ENCODE measurements at regions of chr1 and their contacts with region 1.

Region 1: DNA sequence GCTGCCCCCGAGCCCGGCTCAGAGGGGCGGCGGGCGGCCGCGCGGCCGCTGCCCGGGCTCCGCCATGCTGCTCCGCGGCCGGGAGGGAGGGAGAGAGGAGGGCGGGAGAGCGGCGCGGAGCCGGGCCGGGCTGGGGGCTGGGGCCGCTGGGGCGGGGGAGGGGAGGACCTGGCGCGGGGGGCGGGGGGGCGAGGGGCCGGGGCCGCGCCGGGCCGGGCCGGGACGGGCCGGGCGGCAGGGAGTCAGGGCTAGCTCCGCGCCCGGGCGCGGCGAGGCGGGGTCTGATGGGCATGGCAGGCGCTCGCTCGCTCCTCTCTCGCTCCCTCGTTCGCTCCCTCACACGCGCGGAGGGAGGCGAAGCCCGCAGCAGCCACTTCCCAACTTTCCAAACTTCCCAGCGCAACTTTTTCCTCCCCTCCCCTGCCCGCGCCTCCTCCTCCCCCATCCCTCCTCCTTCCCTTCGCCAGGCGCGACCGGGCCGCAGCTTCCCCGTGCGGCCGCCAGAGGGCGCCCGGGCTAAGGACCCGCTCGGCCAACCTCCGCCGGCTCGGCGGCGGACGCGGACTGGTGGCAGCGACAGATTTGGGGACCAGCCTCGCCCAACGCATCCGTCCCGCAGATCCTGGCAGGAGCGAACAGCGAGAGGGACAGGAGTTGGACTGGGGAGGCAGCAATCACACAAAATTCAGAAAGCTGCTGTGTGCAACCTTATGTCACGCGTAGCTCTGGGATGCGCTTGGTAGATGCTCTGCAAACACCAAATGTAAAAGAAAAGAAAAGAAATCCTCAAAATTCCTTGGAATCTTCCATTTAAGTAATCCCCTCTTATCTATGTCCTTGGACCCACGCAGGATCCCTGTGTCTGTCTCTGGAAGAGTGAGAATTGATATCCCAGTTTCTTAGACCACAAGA is at the start of gene TRABD2B:
- DNase-seq: peak; percentile 95
- H3K4me3 ChIP-seq: peak within 1 kb of the TSS; percentile 62 to 90 (median 82)
- H3K27ac ChIP-seq: peak within 1 kb of the TSS; percentile 84 to 87 (median 86)
- H3K4me1 ChIP-seq: peaks cover 9 to 51% (median 44%) of the 10 kb centered on the region in 4 donors
- H3K27me3 ChIP-seq: peaks cover 0 to 14% (median 0%) of the 10 kb centered on the region in 4 donors
- CTCF ChIP-seq: peak in 2 of 3 experiments; percentile 92 to 97
- EP300 ChIP-seq: no peak
- POLR2A ChIP-seq: no peak
- total RNA-seq, gene TRABD2B: 4.0 to 7.6 (median 4.1) TPM

Region 2: DNA sequence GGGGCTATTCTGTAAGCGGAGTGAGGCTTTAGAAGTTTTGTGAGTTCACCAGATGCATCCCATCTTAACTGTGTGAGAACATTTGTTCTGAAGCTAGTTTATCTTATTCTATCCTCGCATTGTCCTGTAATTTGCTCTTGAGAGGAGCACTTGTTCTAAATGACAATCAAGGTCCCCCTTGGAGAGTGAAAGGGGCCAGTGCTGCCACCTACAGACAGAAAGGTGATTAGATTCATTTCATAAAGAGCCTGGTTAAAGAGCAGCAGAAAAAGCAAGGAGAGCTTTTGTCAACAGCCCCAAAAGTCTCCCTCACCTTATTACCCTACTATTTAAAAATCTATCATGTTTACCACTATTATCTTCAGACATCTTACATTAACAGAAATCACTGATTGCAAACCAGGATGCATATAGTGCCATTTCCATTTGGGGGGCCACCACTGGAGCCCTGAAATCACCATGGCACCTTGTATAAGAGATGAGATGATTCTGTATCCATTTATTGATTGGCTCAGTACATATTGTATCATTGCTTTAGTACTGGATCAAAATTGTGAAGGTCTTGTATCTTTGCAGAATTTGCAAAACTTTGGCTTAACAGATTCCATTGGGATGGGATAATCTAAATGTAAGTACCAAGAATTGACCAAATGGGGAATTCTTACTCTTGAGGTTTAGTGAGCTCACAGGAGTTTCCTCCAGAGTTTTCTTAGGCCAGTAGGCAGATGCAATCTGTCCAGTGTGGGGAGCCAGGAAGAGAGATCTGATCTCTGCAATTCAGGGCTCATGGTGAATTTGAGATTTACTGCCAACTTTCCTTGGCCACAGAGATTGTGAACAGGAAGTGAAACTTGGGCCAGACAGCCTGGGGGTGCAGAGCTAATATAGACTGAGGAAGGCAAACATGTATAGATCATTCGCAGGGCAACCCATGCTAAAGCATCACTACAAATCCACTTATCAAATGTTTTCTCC is 63.9 kb after region 1 on chr1:
- intact Hi-C with region 1: loop called (anchors 5 kb)
- DNase-seq: no peak
- H3K4me3 ChIP-seq: no peak overlapping the region
- H3K27ac ChIP-seq: no peak overlapping the region
- H3K4me1 ChIP-seq: peaks cover 0 to 20% (median 9%) of the 10 kb centered on the region in 4 donors
- H3K27me3 ChIP-seq: no peaks in the 10 kb centered on the region
- CTCF ChIP-seq: peak; percentile 59 to 73 (median 70)
- EP300 ChIP-seq: no peak
- POLR2A ChIP-seq: no peak